Mammary epithelial cell (primary cell): ENCODE measurements at regions of chr18 and their contacts with region 1.

Region 1: GRCh38 chr18:24488824-24489493 is 28.5 kb downstream of the HRH4 start:
- DNase-seq: peak; percentile 16
- H3K4me3 ChIP-seq: no peak overlapping the region
- H3K27ac ChIP-seq: no peak overlapping the region
- H3K4me1 ChIP-seq: no peaks in the 10 kb centered on the region
- H3K27me3 ChIP-seq: peaks cover 2% of the 10 kb centered on the region
- CTCF ChIP-seq: peak; percentile 66 to 83

Region 2: GRCh38 chr18:23958036-23958435 is 530.9 kb before region 1 on chr18:
- CTCF ChIA-PET with region 1: no interaction called
- dilution Hi-C with region 1: no loop called
- in situ Hi-C with region 1: no loop called
- intact Hi-C with region 1: loop called (anchors 5 kb)
- DNase-seq: no peak
- H3K4me3 ChIP-seq: no peak overlapping the region
- H3K27ac ChIP-seq: no peak overlapping the region
- H3K4me1 ChIP-seq: no peaks in the 10 kb centered on the region
- H3K27me3 ChIP-seq: no peaks in the 10 kb centered on the region
- CTCF ChIP-seq: no peak

Region 3: GRCh38 chr18:24362758-24363157 is 126.2 kb before region 1 on chr18:
- CTCF ChIA-PET with region 1: interaction called, 12 read pairs
- dilution Hi-C with region 1: no loop called
- in situ Hi-C with region 1: loop called in 1 of 2 experiments (anchors 10 kb)
- intact Hi-C with region 1: loop called (anchors 1 kb)
- DNase-seq: peak; percentile 45
- H3K4me3 ChIP-seq: no peak overlapping the region
- H3K27ac ChIP-seq: no peak overlapping the region
- H3K4me1 ChIP-seq: peaks cover 6% of the 10 kb centered on the region
- H3K27me3 ChIP-seq: no peaks in the 10 kb centered on the region
- CTCF ChIP-seq: no peak

Region 4: DNA sequence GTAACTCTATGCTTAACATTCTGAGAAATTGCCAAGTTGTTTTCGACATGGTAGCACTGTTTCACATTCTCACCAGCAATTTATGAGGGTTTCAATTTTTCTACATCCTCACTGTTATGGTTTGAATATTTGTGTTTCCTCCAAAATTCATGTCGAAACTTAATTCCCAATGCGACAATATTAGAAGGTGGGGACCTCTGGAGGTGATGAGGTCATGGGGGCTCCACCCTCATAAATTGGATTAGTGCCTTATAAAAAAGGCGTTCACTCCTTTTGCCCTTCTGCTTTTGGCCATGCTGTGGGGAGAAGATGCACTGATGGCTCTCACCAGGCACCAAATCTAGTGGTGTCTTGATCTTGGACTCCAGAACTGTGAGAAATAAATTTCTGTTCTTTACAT is 81.8 kb after region 1 on chr18:
- CTCF ChIA-PET with region 1: no interaction called
- dilution Hi-C with region 1: no loop called
- in situ Hi-C with region 1: no loop called
- intact Hi-C with region 1: no loop called
- DNase-seq: no peak
- H3K4me3 ChIP-seq: no peak overlapping the region
- H3K27ac ChIP-seq: no peak overlapping the region
- H3K4me1 ChIP-seq: peaks cover 18% of the 10 kb centered on the region
- H3K27me3 ChIP-seq: no peaks in the 10 kb centered on the region
- CTCF ChIP-seq: no peak

Region 5: DNA sequence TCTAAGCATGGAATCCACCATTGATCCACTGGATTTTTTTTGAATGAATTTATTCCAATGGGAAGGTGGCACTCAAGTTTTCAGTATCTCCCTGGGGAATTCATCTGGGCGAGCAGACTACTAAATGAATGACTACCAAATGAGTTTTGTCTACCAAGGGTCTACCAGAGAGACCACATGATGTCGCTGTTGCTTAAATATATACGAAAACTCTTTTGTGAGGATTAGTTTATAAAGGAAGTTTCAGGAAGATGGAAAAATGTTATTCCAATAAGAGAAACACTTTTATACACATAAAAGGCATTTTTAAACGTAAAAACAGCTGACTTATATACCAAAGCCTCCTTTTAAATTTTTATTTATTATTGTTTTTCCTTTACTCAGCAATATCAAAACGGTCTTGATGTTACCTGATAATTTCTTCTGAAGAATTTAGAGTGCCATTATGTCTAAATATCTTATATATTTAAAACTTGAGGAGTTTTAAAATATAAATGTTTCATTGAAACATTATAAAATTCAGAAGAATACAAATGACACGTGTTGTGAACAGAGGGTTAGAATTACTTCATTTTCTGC is 111.2 kb after region 1 on chr18:
- CTCF ChIA-PET with region 1: no interaction called
- dilution Hi-C with region 1: no loop called
- in situ Hi-C with region 1: no loop called
- intact Hi-C with region 1: loop called (anchors 5 kb)
- DNase-seq: peak; percentile 45
- H3K4me3 ChIP-seq: no peak overlapping the region
- H3K27ac ChIP-seq: no peak overlapping the region
- H3K4me1 ChIP-seq: peaks cover 8% of the 10 kb centered on the region
- H3K27me3 ChIP-seq: no peaks in the 10 kb centered on the region
- CTCF ChIP-seq: peak; percentile 55 to 61

Region 6: DNA sequence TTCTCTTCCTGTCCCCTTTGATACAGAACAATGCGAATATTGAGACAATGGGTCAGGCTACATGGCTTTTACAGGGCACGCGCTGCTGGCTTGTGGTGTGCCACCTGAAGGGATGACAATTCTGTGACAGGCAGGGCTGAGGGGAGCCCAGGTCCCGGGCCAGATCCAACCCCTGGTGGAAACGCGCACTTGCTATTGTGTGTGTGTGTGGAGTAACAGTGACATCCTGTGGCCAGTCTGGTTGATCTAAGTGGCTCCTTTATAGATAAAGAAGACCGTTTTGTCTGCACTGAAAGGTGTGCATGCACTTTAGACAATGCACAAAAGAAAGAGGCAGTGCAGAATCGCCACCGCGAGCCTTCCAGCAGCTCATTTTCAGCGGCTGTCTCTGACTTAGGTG is 245.1 kb after region 1 on chr18:
- CTCF ChIA-PET with region 1: interaction called, 8 read pairs
- dilution Hi-C with region 1: no loop called
- in situ Hi-C with region 1: no loop called
- intact Hi-C with region 1: loop called (anchors 1 kb)
- DNase-seq: peak; percentile 62
- H3K4me3 ChIP-seq: no peak overlapping the region
- H3K27ac ChIP-seq: no peak overlapping the region
- H3K4me1 ChIP-seq: peaks cover 56% of the 10 kb centered on the region
- H3K27me3 ChIP-seq: no peaks in the 10 kb centered on the region
- CTCF ChIP-seq: peak; percentile 54 to 58